IMR-90 (cell line): ENCODE measurements at regions of chr20 and their contacts with region 1.

Region 1: GRCh38 chr20:2101865-2102584 is 398 bp downstream of the STK35 start:
- DNase-seq: peak; percentile 91
- ATAC-seq: peak; percentile 88
- H3K4me3 ChIP-seq: peak overlapping the region; percentile 81
- H3K27ac ChIP-seq: peak overlapping the region; percentile 99
- H3K4me1 ChIP-seq: no peaks in the 10 kb centered on the region
- H3K27me3 ChIP-seq: no peaks in the 10 kb centered on the region; the same call in 1 of the 2 replicates
- CTCF ChIP-seq: no peak
- POLR2A ChIP-seq: peak; percentile 46
- RAD21 ChIP-seq: no peak

Region 2: GRCh38 chr20:1087311-1087905 is 1014.6 kb before region 1 on chr20:
- CTCF ChIA-PET with region 1: no interaction called
- POLR2A ChIA-PET with region 1: no interaction called
- dilution Hi-C with region 1: no loop called
- in situ Hi-C with region 1: no loop called
- intact Hi-C with region 1: no loop called
- DNase-seq: no peak
- ATAC-seq: no peak
- H3K4me3 ChIP-seq: no peak overlapping the region
- H3K27ac ChIP-seq: no peak overlapping the region
- H3K4me1 ChIP-seq: no peaks in the 10 kb centered on the region
- H3K27me3 ChIP-seq: no peaks in the 10 kb centered on the region; the same call in 1 of the 2 replicates
- CTCF ChIP-seq: no peak
- POLR2A ChIP-seq: no peak
- RAD21 ChIP-seq: no peak

Region 3: DNA sequence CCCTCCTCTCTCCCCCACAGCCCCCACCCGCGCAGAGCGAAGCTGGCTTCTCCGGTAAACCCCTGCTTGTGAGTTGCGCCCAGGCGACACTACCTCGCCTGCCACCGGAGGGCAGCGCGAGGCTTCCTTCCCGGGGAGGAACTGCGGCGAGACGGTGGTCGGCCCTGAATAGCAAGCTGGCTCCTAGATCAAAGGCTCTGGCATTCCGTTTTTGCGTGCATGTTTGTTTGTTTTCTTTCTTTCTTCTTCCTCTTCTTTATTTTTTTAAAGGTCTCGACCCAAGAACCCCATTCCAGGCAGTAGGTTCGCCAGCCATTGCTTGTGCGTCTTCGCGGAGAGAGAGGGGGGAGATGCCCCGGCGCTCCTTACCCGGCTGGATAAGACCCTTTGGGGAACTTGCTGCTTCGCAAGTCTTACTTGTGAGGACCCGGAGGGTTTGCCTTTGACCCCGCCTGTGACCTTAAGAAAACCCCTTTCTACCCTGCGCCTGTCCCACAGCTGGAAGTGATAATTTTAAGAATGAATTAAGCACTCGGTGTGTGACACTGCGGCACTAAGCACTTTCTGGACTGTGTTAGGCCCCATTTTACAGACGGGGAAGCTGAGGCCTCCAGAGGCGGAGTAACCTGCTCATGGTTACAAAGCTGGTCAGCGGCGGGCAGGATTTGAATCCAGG is 299.5 kb before region 1 on chr20:
- CTCF ChIA-PET with region 1: no interaction called
- POLR2A ChIA-PET with region 1: no interaction called
- dilution Hi-C with region 1: no loop called
- in situ Hi-C with region 1: no loop called
- intact Hi-C with region 1: loop called (anchors 2 kb)
- DNase-seq: peak; percentile 76
- ATAC-seq: peak; percentile 68
- H3K4me3 ChIP-seq: peak overlapping the region; percentile 50
- H3K27ac ChIP-seq: no peak overlapping the region
- H3K4me1 ChIP-seq: peaks cover 5% of the 10 kb centered on the region
- H3K27me3 ChIP-seq: peaks cover 2% of the 10 kb centered on the region; the same call in 1 of the 2 replicates
- CTCF ChIP-seq: peak; percentile 77
- POLR2A ChIP-seq: no peak
- RAD21 ChIP-seq: peak; percentile 84

Region 4: GRCh38 chr20:1883986-1884385 is 218.0 kb before region 1 on chr20:
- CTCF ChIA-PET with region 1: no interaction called
- POLR2A ChIA-PET with region 1: no interaction called
- dilution Hi-C with region 1: no loop called
- in situ Hi-C with region 1: no loop called
- intact Hi-C with region 1: no loop called
- DNase-seq: no peak
- ATAC-seq: no peak
- H3K4me3 ChIP-seq: no peak overlapping the region
- H3K27ac ChIP-seq: no peak overlapping the region
- H3K4me1 ChIP-seq: peaks cover 7% of the 10 kb centered on the region
- H3K27me3 ChIP-seq: peaks cover 10% of the 10 kb centered on the region; the same call in 1 of the 2 replicates
- CTCF ChIP-seq: no peak
- POLR2A ChIP-seq: no peak
- RAD21 ChIP-seq: no peak

Region 5: DNA sequence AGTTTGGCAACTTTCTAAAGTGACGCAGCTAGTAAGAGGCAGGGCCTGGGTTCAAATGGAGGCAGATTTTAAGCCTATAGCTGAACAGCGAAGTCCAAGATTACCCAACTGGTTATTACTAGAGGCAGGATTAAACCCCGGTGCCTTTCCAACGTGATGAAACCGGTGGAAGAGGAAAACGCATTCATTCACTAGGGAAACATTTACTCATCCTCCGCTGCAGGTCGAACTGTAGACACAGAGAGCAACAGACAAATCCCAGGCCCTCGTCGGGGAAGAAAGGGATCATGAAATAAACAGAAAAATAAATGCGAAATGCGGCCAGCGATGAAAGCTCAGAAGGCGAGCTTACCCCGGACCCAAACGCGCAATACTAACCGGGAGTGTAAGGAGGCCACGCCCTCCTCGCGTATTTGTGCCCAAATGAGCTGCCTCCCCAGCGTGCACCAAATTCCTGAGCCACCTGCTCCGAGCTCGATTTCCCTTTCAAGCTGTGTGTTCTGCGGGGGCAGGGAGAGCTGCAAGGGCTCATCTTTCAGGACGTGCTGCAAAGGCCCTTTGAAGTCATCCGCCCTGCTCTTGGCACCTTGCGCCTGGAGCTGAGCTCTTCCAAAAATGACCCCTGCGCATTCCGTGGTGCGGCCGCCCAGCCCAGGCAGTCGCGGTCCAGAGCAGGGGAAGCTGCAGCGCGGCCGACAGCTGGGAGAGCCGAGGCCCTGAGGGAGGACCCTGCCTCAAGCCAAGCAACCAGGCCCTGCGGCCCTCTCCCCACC is 155.1 kb before region 1 on chr20:
- CTCF ChIA-PET with region 1: no interaction called
- POLR2A ChIA-PET with region 1: no interaction called
- dilution Hi-C with region 1: no loop called
- in situ Hi-C with region 1: no loop called
- intact Hi-C with region 1: no loop called
- DNase-seq: peak; percentile 17
- ATAC-seq: peak; percentile 50
- H3K4me3 ChIP-seq: no peak overlapping the region; the same call in 1 of the 2 replicates
- H3K27ac ChIP-seq: no peak overlapping the region
- H3K4me1 ChIP-seq: peaks cover 2% of the 10 kb centered on the region
- H3K27me3 ChIP-seq: peaks cover 74% of the 10 kb centered on the region
- CTCF ChIP-seq: no peak
- POLR2A ChIP-seq: no peak
- RAD21 ChIP-seq: no peak

Region 6: DNA sequence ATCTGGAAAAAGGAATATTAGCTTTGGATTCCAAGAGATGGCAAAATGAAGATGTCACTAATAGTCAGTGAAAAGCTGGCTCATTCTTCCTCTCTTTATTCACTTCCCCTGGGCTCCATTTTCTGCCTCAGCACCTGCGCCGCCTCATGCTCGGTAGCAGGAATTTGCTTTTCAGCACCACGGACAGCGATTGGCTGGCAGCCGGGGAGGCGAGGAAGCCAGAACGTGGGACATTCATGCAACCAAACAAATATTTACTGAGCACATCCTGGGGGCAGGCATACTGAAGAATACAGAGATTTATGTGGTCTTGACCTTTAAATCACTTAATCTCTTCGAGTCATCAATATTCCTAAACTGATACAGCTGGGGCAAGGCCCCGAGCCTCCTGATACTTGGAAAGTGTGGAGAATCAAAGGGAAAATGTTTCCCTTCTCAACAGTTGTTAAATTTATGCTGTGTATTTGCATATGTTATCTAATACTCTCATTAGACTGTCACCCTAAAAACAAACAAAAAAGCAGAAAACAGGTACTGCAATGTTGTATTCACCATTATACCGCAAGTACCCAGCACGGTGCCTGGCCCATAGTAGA is 96.1 kb before region 1 on chr20:
- CTCF ChIA-PET with region 1: no interaction called
- POLR2A ChIA-PET with region 1: no interaction called
- dilution Hi-C with region 1: no loop called
- in situ Hi-C with region 1: no loop called
- intact Hi-C with region 1: loop called (anchors 2 kb)
- DNase-seq: peak; percentile 45
- ATAC-seq: no peak; the same call in none of the 2 replicates
- H3K4me3 ChIP-seq: no peak overlapping the region
- H3K27ac ChIP-seq: no peak overlapping the region
- H3K4me1 ChIP-seq: no peaks in the 10 kb centered on the region
- H3K27me3 ChIP-seq: peaks cover 2% of the 10 kb centered on the region
- CTCF ChIP-seq: no peak
- POLR2A ChIP-seq: no peak
- RAD21 ChIP-seq: no peak

Region 7: GRCh38 chr20:2143594-2143993 is 41.6 kb after region 1 on chr20:
- CTCF ChIA-PET with region 1: no interaction called
- POLR2A ChIA-PET with region 1: interaction called, 12 read pairs
- dilution Hi-C with region 1: no loop called
- in situ Hi-C with region 1: no loop called
- intact Hi-C with region 1: loop called (anchors 5 kb)
- DNase-seq: no peak
- ATAC-seq: no peak
- H3K4me3 ChIP-seq: no peak overlapping the region
- H3K27ac ChIP-seq: no peak overlapping the region
- H3K4me1 ChIP-seq: peaks cover 15% of the 10 kb centered on the region
- H3K27me3 ChIP-seq: no peaks in the 10 kb centered on the region
- CTCF ChIP-seq: no peak
- POLR2A ChIP-seq: no peak
- RAD21 ChIP-seq: no peak

Region 8: DNA sequence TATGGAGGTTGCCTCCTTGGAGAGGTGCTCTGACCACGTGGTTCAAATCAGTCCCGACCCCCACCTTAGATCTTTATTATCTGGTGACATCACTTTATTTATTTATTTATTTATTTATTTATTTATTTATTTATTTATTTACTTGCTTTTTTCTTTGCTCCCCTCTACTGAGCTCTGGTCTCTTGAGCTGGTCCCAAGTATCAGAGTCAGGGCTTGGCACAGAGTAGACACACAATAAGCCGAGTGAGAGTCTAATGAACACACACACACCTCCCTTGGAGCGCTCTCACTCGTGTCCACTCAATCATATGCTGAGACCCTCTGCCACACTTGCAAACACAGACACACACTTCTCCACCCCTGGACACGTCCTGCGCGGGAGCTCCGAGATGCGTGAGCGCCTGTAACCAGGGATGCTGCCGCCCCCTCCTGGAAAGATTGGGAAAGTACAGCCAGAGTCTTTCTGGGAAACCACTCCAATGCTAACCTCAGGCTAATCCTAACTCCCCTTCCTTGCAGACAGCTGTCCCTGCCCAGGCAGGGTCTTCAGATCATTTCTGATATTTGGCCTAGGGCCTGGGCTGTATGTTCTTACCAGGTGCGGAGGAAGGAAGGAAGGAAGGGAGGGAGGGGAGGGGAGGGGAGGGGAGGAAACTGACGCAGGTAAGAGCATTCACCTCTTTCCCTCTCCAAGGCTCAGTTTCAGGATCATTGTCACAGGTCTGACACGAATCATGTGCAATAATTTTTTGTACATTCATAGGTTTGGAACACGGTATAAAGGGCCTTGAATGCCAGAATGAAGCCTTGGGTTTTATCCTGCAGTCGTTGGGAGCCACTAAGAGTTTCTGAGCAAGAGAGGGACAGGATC is 70.5 kb after region 1 on chr20:
- CTCF ChIA-PET with region 1: interaction called, 10 read pairs
- POLR2A ChIA-PET with region 1: no interaction called
- dilution Hi-C with region 1: no loop called
- in situ Hi-C with region 1: no loop called
- intact Hi-C with region 1: loop called (anchors 5 kb)
- DNase-seq: peak; percentile 45
- ATAC-seq: peak; percentile 96
- H3K4me3 ChIP-seq: no peak overlapping the region
- H3K27ac ChIP-seq: no peak overlapping the region
- H3K4me1 ChIP-seq: no peaks in the 10 kb centered on the region
- H3K27me3 ChIP-seq: peaks cover 32% of the 10 kb centered on the region
- CTCF ChIP-seq: peak; percentile 94
- POLR2A ChIP-seq: 0 out of 2 replicates have a peak, but pooled peaks have one; percentile 27
- RAD21 ChIP-seq: peak; percentile 98